A673 (cell line): ENCODE measurements at regions of chr11 and their contacts with region 1.

Region 1: GRCh38 chr11:17005646-17006045 is 8.6 kb downstream of the PLEKHA7 start:
- DNase-seq: no peak
- H3K4me3 ChIP-seq: no peak overlapping the region
- H3K27ac ChIP-seq: no peak overlapping the region
- H3K4me1 ChIP-seq: no peaks in the 10 kb centered on the region
- H3K27me3 ChIP-seq: no peaks in the 10 kb centered on the region
- CTCF ChIP-seq: no peak

Region 2: GRCh38 chr11:16956538-16957153 is 49.0 kb before region 1 on chr11:
- CTCF ChIA-PET with region 1: interaction called, 10 read pairs
- POLR2A ChIA-PET with region 1: no interaction called
- intact Hi-C with region 1: no loop called
- DNase-seq: no peak
- H3K4me3 ChIP-seq: no peak overlapping the region
- H3K27ac ChIP-seq: no peak overlapping the region
- H3K4me1 ChIP-seq: no peaks in the 10 kb centered on the region
- H3K27me3 ChIP-seq: no peaks in the 10 kb centered on the region
- CTCF ChIP-seq: no peak